ENCODE measurements at regions of chr2 and their contacts with region 1.

Region 1: DNA sequence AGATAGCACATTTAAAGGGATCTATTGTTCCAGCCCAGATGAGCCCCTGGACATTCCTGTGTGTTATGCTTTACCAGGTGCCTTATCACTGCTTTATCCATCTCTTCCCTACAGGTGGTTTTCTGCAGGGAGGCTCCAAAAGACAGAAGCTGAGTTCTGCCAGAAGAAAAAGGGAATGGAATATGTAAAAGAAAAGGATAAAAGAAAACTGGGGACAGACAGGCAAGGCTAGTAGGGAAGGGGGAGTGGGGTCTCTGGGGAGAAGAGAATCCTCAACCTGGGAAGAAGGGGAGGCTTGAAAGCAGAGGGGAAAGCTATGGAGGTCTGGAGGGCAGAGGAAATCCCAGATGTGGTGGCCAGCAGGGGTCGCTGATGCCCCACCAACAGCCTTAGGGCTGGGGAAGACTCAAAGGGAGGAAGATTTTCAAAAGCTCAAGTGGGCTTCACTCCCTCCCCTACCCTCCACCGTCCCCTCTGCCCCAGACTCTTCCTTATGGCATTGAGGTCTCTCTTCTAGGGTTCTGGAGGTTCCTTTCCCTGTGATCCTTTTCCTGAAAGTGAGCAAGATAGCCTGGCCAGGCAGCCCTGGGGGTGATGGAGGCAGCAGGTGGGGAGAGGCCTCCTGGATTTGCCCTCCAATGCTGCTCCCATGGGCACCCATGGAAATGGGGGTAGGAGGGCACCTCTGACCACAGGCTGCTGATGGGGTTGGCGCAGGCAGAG is 178.1 kb upstream of the PKDCC start:
- DNase-seq: peak; percentile 77
- CTCF ChIP-seq: peak; percentile 76

Region 2: DNA sequence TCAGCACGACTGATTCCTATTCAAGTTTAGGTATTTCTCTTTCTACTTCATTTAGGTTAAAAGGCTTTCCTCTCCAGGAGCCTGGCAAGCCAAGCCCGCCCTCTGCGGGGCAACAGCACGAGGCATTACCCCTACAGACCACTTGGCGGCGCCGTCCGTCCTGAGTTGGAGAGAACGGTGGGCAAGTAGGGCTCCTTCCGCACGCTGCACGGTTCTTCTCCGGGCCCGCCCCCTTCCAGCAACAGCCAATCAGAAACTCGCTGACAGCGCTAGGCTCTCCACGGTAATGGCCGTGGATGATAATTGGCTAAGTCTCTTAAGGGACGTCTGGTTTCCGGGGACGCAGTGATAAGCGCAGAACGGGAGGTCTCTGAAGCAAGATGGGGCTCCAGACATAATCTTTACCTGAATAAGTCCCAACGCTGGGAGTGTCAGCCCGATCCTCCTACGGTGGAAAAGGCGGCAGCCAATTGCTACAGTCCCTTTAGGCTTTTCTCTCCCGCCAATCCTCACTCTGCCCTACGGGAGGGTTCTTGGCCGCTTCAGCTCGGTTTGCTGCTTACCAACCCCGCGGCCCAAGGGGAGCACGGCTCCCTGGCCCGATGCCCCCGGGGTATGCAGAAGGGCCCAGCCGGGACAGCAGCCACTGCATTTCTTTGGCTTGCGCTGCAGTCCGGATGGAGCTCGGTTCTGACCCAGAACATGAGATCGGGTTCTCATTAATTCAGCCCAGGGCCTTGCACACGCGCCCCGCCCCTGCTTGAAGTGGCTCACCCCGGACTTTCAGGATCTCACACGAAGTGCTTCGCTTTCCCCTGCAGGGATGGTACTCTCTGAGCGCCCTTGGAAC is 28.8 kb before region 1 on chr2:
- CTCF ChIA-PET with region 1: interaction called, 45 read pairs
- POLR2A ChIA-PET with region 1: no interaction called
- DNase-seq: peak; percentile 94
- CTCF ChIP-seq: peak; percentile 99

Region 3: GRCh38 chr2:41886757-41887156 is 17.1 kb after region 1 on chr2:
- CTCF ChIA-PET with region 1: interaction called, 45 read pairs
- POLR2A ChIA-PET with region 1: no interaction called
- DNase-seq: no peak
- CTCF ChIP-seq: no peak

Region 4: DNA sequence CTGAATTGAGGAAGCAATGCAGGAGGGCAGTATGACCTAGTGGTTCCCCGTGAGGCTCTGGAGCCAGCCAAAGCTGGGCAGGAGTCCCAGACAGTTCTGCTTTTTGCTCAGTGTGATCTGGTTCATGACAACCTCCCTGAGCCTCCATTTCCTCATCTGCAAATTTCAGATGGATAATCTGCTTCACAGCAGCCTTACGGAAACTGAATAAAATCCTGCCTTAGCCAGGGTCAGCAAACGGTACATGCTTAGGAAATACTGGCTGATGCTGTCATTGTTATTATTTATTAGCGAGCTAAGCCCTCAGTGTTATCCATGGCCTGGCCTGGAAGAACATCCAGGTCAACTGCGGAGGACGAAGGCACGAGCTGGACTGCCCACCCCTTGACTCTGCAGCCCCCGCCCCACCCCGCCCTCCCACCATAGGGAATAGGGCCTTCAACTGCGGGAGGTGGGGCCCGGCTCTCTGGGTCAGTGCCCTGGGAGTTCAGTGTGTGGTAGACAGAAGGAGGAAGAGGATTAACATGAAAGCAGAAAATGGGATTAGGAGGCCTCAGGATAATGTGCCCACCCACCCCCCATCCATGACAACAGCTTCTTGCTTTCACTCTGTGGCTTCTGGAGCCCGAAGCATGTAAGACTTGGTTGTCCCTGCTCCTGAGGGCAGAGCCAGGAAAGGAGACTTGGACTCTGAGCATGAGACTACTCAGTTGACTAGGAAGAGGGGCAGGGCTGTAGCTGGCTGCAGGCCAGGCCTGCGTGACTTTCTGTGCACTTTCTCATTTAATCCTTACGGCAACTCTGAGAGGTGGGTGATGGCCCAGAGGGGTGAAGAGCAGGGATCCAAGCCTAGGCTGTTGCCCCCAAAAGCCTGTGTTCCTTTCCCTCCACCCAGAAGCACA is 191.3 kb after region 1 on chr2:
- CTCF ChIA-PET with region 1: interaction called, 34 read pairs
- POLR2A ChIA-PET with region 1: no interaction called
- DNase-seq: no peak
- CTCF ChIP-seq: no peak

Region 5: DNA sequence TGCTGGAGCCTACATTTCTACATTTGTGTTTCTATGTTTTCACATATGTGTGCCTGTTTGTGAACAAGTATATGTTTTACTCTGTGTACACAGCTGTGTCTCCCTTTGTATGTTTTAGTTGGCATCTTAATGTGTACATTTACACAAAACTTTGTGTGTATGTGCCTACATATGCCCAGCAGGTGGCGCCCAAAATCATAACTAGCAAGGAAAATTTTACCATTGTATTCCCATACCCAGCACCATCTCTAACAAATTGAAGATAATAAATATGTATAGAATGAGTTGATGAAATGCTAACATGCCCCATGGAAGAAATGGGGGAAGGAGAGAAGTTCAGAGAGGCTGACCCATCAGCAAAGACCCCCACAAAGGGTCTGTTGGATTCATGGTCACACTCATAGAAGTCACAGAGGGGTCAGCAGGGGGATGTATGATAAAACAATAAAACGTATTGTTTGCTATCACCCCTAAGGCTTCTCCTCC is 226.3 kb after region 1 on chr2:
- CTCF ChIA-PET with region 1: interaction called, 651 read pairs
- POLR2A ChIA-PET with region 1: no interaction called
- DNase-seq: peak; percentile 37
- CTCF ChIP-seq: peak; percentile 78

Measured in GM10248 (cell line).